ENCODE measurements at regions of chr2 and their contacts with region 1.

Region 1: DNA sequence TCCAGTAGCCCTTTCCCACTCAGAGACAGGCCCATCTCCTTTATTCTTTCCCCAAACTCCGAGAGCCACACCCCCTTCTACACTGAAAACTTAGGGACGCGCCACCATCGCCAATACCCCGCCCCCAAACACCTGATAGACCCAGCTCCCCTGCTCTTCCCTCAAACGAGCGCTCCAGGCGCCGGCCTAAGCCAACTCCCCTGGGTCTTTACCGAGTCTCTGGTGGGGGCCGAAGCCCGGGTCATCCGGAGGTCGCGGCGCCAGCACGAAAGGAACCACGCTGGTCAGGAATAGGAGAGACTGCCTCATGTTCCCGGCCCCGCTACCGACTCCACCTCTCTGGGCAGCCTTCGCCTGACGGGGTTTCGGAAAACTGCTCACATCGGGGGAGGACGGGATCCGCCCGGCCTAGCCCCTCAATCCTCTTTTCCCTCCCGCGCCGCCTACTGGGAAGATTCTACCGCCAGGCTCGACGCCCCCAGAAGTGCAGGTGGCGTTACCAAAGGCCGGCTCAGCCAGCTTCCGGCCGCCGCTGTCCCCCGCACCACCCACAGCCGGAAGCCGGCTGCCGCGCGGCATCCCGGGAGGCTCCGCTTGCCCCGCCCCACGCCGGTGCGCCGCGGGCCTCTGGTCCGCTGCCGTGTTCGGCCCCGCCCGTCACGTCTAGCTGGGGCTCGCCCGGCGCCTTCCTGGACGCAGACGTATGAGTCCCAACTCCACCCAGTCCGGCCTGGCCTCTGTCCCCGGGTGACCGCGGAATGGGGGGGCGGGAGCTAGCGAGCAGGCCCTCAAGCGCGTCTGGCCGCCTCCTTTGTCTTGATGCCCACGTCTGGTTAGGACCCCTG is at the start of gene ADAM17:
- DNase-seq: peak; percentile 88
- H3K4me3 Mint-ChIP-seq: peak within 1 kb of the TSS; percentile 98
- H3K27ac Mint-ChIP-seq: peak within 1 kb of the TSS; percentile 96
- H3K4me1 Mint-ChIP-seq: peaks cover 46% of the 10 kb centered on the region
- H3K27me3 Mint-ChIP-seq: no peaks in the 10 kb centered on the region
- total RNA-seq, gene ADAM17: 10.5 to 11.0 TPM

Region 2: GRCh38 chr2:9423100-9423921 is 132.2 kb before region 1 on chr2 and contains the starts of genes CPSF3 and ITGB1BP1:
- CTCF ChIA-PET with region 1: no interaction called
- intact Hi-C with region 1: loop called (anchors 1 kb)
- DNase-seq: peak; percentile 97
- H3K4me3 Mint-ChIP-seq: no peak within 1 kb of the TSS
- H3K27ac Mint-ChIP-seq: peak within 1 kb of the TSS; percentile 92
- H3K4me1 Mint-ChIP-seq: peaks cover 39% of the 10 kb centered on the region
- H3K27me3 Mint-ChIP-seq: no peaks in the 10 kb centered on the region
- total RNA-seq, gene CPSF3: 64.5 to 65.7 TPM
- total RNA-seq, gene ITGB1BP1: 97.2 to 97.4 TPM

Region 3: DNA sequence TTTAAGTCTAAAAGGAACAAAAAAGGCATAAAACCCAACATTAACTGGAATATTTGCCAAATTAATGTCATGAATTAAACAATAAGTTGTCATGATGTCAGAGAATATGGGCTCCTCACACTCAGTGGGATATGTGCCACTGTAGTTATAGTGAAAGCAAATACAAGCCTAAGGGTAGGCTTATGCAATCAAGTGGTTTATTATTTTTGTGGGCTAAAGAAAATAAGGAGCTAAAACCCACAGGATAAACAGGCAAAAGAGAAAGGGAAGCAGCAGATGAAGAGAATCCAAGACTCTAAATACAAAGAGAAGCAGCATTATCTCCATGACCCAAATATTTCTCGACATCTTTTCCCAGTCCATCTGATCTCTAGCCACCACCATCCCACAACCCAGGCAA is 57.8 kb after region 1 on chr2:
- CTCF ChIA-PET with region 1: interaction called, 3 read pairs
- intact Hi-C with region 1: loop called (anchors 1 kb)
- DNase-seq: no peak
- H3K4me3 Mint-ChIP-seq: no peak overlapping the region
- H3K27ac Mint-ChIP-seq: no peak overlapping the region
- H3K4me1 Mint-ChIP-seq: peaks cover 78% of the 10 kb centered on the region
- H3K27me3 Mint-ChIP-seq: no peaks in the 10 kb centered on the region

Region 4: GRCh38 chr2:9739531-9739964 is 184.0 kb after region 1 on chr2:
- CTCF ChIA-PET with region 1: no interaction called
- intact Hi-C with region 1: loop called (anchors 2 kb)
- DNase-seq: peak; percentile 75
- H3K4me3 Mint-ChIP-seq: peak overlapping the region; percentile 65
- H3K27ac Mint-ChIP-seq: peak overlapping the region; percentile 80
- H3K4me1 Mint-ChIP-seq: peaks cover 45% of the 10 kb centered on the region
- H3K27me3 Mint-ChIP-seq: no peaks in the 10 kb centered on the region

Region 5: GRCh38 chr2:9975805-9976447 is 420.4 kb after region 1 on chr2:
- CTCF ChIA-PET with region 1: no interaction called
- intact Hi-C with region 1: loop called (anchors 5 kb)
- DNase-seq: peak; percentile 53
- H3K4me3 Mint-ChIP-seq: no peak overlapping the region
- H3K27ac Mint-ChIP-seq: no peak overlapping the region
- H3K4me1 Mint-ChIP-seq: peaks cover 40% of the 10 kb centered on the region
- H3K27me3 Mint-ChIP-seq: peaks cover 4% of the 10 kb centered on the region

Region 6: GRCh38 chr2:10467401-10467800 is 911.9 kb after region 1 on chr2:
- CTCF ChIA-PET with region 1: no interaction called
- intact Hi-C with region 1: no loop called
- DNase-seq: no peak
- H3K4me3 Mint-ChIP-seq: no peak overlapping the region
- H3K27ac Mint-ChIP-seq: no peak overlapping the region
- H3K4me1 Mint-ChIP-seq: no peaks in the 10 kb centered on the region
- H3K27me3 Mint-ChIP-seq: no peaks in the 10 kb centered on the region

Region 7: GRCh38 chr2:10659898-10660568 is 1104.5 kb after region 1 on chr2:
- CTCF ChIA-PET with region 1: no interaction called
- intact Hi-C with region 1: loop called (anchors 10 kb)
- DNase-seq: peak; percentile 69
- H3K4me3 Mint-ChIP-seq: no peak overlapping the region
- H3K27ac Mint-ChIP-seq: no peak overlapping the region
- H3K4me1 Mint-ChIP-seq: peaks cover 19% of the 10 kb centered on the region
- H3K27me3 Mint-ChIP-seq: no peaks in the 10 kb centered on the region